GM23248 (cell line): ENCODE measurements at regions of chr14 and their contacts with region 1.

Region 1: GRCh38 chr14:49879683-49880204 is 13.1 kb upstream of the ARF6 start:
- DNase-seq: peak; percentile 77
- H3K4me3 ChIP-seq: no peak overlapping the region
- H3K27ac ChIP-seq: no peak overlapping the region
- H3K4me1 ChIP-seq: peaks cover 6% of the 10 kb centered on the region; the same call in 1 of the 2 replicates
- H3K27me3 ChIP-seq: no peaks in the 10 kb centered on the region

Region 2: GRCh38 chr14:50099335-50099734 is 219.6 kb after region 1 on chr14:
- in situ Hi-C with region 1: loop called (anchors 10 kb)
- DNase-seq: peak; percentile 33
- H3K4me3 ChIP-seq: no peak overlapping the region
- H3K27ac ChIP-seq: no peak overlapping the region
- H3K4me1 ChIP-seq: no peaks in the 10 kb centered on the region
- H3K27me3 ChIP-seq: no peaks in the 10 kb centered on the region